ENCODE measurements at regions of chr12 and their contacts with region 1.

Region 1: DNA sequence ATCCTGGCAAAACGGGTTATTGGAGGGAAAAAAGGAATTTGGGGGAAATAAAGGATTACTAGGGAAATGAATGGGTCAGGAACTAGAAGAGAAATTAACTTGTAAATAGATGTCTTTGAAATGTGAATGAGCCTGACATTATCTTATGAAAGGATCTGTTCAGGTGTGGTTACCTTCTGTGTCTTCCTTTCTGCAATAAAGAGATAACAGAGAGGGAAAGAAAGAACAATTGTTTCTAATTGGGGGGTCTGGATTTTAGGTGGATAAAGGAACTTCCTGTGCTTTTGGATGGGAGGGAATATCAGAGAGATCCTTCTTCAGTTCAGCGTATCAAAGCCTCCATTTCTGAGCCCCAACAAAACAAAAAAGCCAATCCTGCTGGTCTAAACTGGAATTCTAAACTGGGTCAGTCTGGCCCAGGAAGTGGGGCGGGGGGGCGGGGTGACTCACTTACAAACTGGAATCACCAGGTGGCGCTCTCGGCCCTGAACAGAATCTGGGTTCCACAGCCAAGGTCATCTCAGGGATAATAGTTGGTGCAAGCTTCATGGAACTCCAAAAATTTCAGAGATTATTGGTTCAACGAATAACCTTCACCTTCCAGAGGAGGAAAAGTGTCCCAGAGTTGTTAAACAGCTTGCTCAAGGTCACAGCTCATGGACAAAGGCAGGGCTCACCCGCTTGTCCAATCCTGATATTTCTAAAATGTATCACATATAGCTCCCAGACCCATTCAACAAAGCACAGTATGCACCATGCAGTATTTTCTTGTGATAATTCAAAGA is 15.2 kb upstream of the PEBP1 start:
- DNase-seq: peak; percentile 36
- H3K4me3 Mint-ChIP-seq: no peak overlapping the region
- H3K27ac Mint-ChIP-seq: peak overlapping the region; percentile 21
- H3K4me1 Mint-ChIP-seq: peaks cover 8% of the 10 kb centered on the region
- H3K27me3 Mint-ChIP-seq: no peaks in the 10 kb centered on the region

Region 2: GRCh38 chr12:117874842-117875434 is 245.8 kb before region 1 on chr12:
- intact Hi-C with region 1: loop called (anchors 5 kb)
- DNase-seq: peak; percentile 48
- H3K4me3 Mint-ChIP-seq: no peak overlapping the region
- H3K27ac Mint-ChIP-seq: no peak overlapping the region
- H3K4me1 Mint-ChIP-seq: peaks cover 4% of the 10 kb centered on the region
- H3K27me3 Mint-ChIP-seq: peaks cover 18% of the 10 kb centered on the region

Region 3: GRCh38 chr12:118135788-118136558 is 15.2 kb after region 1 on chr12 and contains the start of gene PEBP1:
- intact Hi-C with region 1: loop called (anchors 2 kb)
- DNase-seq: peak; percentile 90
- H3K4me3 Mint-ChIP-seq: peak within 1 kb of the TSS; percentile 99
- H3K27ac Mint-ChIP-seq: peak within 1 kb of the TSS; percentile 89
- H3K4me1 Mint-ChIP-seq: peaks cover 25% of the 10 kb centered on the region
- H3K27me3 Mint-ChIP-seq: no peaks in the 10 kb centered on the region
- total RNA-seq, gene PEBP1: 177 and 184 TPM in 2 replicates

Region 4: GRCh38 chr12:118183705-118184104 is 62.9 kb after region 1 on chr12:
- intact Hi-C with region 1: loop called (anchors 5 kb)
- DNase-seq: no peak
- H3K4me3 Mint-ChIP-seq: no peak overlapping the region
- H3K27ac Mint-ChIP-seq: no peak overlapping the region
- H3K4me1 Mint-ChIP-seq: peaks cover 9% of the 10 kb centered on the region
- H3K27me3 Mint-ChIP-seq: no peaks in the 10 kb centered on the region